ENCODE measurements at regions of chr1 and their contacts with region 1.

Region 1: DNA sequence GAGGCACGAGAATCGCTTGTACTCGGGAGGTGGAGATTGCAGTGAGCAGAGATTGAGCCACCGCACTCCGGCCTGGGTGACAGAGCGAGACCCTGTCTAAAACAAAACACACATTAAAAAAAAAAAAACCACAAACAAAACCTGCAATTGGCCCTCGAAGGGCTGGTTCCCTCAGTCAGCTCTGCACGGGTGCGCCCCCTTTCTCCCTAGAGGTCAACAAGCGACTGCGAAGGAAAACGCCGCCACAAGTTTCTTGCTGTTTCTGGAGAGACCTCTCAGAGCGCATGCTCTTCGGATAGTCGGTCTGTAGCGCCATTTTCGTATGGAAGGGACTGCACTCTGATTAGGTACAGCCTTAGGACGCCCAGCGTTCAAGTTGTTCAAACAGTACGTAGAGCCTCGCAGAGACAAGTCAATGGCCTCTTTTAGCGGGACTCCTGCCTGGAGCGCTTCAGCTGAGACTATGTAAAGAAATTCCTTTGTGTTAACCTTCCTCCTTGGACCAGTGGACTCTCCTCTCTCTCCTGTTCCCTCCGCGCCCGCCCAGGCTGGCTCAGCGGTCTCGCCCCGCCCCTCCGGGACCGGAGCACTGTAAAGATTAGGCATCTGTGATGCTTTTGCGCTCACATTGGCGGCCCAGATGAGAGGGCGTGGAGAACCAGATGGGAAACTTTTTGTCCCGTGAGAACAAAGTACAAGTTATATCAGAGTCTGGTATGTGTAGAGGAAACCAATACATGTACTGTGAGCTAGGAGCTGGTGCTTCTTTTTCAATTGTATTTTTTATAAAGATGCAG is 1.0 kb upstream of the CDC14A start:
- DNase-seq: peak; percentile 90 to 96 (median 94)
- ATAC-seq: peak; percentile 88 to 90
- H3K4me3 ChIP-seq: peak overlapping the region; percentile 65
- H3K27ac ChIP-seq: peak overlapping the region; percentile 92
- H3K4me1 ChIP-seq: no peaks in the 10 kb centered on the region
- H3K27me3 ChIP-seq: no peaks in the 10 kb centered on the region

Region 2: GRCh38 chr1:100051401-100051800 is 299.9 kb before region 1 on chr1:
- intact Hi-C with region 1: no loop called
- DNase-seq: no peak
- ATAC-seq: no peak
- H3K4me3 ChIP-seq: no peak overlapping the region
- H3K27ac ChIP-seq: no peak overlapping the region
- H3K4me1 ChIP-seq: peaks cover 4% of the 10 kb centered on the region
- H3K27me3 ChIP-seq: no peaks in the 10 kb centered on the region

Region 3: DNA sequence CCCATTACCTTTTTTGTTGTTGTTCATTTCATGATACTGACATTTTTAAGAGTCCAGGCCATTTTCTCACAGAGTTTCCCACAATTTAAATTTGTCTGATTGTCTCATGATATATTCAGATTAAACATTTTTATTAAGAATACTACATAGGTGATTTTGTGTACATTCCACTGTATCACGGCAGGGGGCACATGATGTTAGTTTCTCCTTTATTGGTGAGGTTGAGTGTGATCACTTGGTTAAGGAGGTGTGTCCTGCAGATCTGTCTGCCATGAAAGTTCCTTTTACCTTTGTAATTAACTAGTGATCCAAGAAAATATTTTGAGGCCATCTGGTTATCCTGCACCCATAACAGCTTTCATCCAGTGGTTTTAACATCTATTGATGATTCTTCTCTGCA is 73.4 kb before region 1 on chr1:
- intact Hi-C with region 1: loop called in 1 of 4 experiments (anchors 10 kb)
- DNase-seq: no peak
- ATAC-seq: no peak
- H3K4me3 ChIP-seq: no peak overlapping the region
- H3K27ac ChIP-seq: no peak overlapping the region
- H3K4me1 ChIP-seq: no peaks in the 10 kb centered on the region
- H3K27me3 ChIP-seq: no peaks in the 10 kb centered on the region

Region 4: DNA sequence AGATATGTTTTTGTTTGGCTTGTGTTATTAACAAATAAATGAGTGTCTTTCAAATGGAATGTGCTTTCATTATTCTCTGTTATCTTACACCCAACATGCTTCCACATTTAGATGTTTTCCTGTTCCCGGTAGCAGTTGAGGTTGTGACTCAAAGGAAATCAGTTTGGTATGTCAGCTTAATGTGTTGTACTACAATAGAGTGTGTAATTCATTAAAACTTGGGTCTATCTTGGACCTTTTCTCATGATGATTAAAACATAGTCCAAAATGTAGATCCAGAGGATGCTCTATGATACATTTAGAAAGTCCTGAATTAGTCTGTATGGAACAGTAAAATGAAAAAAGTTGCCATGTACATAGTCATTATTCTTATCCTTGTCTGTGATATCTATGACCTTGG is 58.6 kb before region 1 on chr1:
- intact Hi-C with region 1: loop called in 1 of 4 experiments (anchors 5 kb)
- DNase-seq: no peak
- ATAC-seq: peak in 1 of 2 donors; percentile 76
- H3K4me3 ChIP-seq: no peak overlapping the region
- H3K27ac ChIP-seq: no peak overlapping the region
- H3K4me1 ChIP-seq: no peaks in the 10 kb centered on the region
- H3K27me3 ChIP-seq: no peaks in the 10 kb centered on the region

Region 5: GRCh38 chr1:100396651-100397050 is 45.4 kb after region 1 on chr1:
- intact Hi-C with region 1: loop called in 1 of 4 experiments (anchors 5 kb)
- DNase-seq: no peak
- ATAC-seq: no peak
- H3K4me3 ChIP-seq: no peak overlapping the region
- H3K27ac ChIP-seq: no peak overlapping the region
- H3K4me1 ChIP-seq: peaks cover 3% of the 10 kb centered on the region
- H3K27me3 ChIP-seq: no peaks in the 10 kb centered on the region

Region 6: GRCh38 chr1:100452641-100453040 is 101.3 kb after region 1 on chr1:
- intact Hi-C with region 1: loop called in 2 of 4 experiments (anchors 5 to 10 kb)
- DNase-seq: no peak
- ATAC-seq: no peak
- H3K4me3 ChIP-seq: no peak overlapping the region
- H3K27ac ChIP-seq: no peak overlapping the region
- H3K4me1 ChIP-seq: no peaks in the 10 kb centered on the region
- H3K27me3 ChIP-seq: no peaks in the 10 kb centered on the region

Region 7: GRCh38 chr1:100459358-100460114 is 108.2 kb after region 1 on chr1:
- intact Hi-C with region 1: loop called in 2 of 4 experiments (anchors 5 to 10 kb)
- DNase-seq: peak; percentile 71 to 82 (median 81)
- ATAC-seq: peak; percentile 86 to 91
- H3K4me3 ChIP-seq: no peak overlapping the region
- H3K27ac ChIP-seq: no peak overlapping the region
- H3K4me1 ChIP-seq: no peaks in the 10 kb centered on the region
- H3K27me3 ChIP-seq: no peaks in the 10 kb centered on the region

Region 8: DNA sequence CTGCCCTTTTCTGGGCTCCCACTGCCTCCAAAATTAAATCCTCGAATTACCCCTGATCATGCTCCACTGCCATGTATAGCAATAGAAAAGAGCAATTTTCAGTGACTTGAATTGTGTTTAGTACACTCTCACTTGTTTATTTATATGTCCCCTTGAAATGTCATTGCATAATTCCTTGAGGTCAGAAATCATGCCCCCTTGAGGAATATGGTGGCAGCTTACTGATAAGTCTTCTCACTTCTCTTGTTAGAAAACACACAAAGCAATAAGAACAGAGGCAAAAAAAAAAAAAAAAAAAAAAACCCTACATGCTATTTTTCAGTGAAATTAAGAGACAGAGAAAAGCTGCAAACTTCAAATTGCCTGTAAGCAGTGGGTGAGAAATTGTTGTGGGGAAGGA is 224.1 kb after region 1 on chr1:
- intact Hi-C with region 1: no loop called
- DNase-seq: no peak
- ATAC-seq: no peak
- H3K4me3 ChIP-seq: no peak overlapping the region
- H3K27ac ChIP-seq: no peak overlapping the region
- H3K4me1 ChIP-seq: no peaks in the 10 kb centered on the region
- H3K27me3 ChIP-seq: no peaks in the 10 kb centered on the region